ENCODE measurements at regions of chr3 and their contacts with region 1.

Region 1: GRCh38 chr3:69051756-69052471 is at the start of gene TMF1:
- DNase-seq: peak; percentile 96 to 98 (median 97)
- H3K4me3 ChIP-seq: peak within 1 kb of the TSS; percentile 61 to 98 (median 87)
- H3K27ac ChIP-seq: peak within 1 kb of the TSS; percentile 60 to 98 (median 91)
- H3K27me3 ChIP-seq: no peaks in the 10 kb centered on the region
- CTCF ChIP-seq: peak in 19 of 56 donors; percentile 2 to 50 (median 22)
- total RNA-seq, gene TMF1: 26.4 to 42.8 (median 33.8) TPM

Region 2: DNA sequence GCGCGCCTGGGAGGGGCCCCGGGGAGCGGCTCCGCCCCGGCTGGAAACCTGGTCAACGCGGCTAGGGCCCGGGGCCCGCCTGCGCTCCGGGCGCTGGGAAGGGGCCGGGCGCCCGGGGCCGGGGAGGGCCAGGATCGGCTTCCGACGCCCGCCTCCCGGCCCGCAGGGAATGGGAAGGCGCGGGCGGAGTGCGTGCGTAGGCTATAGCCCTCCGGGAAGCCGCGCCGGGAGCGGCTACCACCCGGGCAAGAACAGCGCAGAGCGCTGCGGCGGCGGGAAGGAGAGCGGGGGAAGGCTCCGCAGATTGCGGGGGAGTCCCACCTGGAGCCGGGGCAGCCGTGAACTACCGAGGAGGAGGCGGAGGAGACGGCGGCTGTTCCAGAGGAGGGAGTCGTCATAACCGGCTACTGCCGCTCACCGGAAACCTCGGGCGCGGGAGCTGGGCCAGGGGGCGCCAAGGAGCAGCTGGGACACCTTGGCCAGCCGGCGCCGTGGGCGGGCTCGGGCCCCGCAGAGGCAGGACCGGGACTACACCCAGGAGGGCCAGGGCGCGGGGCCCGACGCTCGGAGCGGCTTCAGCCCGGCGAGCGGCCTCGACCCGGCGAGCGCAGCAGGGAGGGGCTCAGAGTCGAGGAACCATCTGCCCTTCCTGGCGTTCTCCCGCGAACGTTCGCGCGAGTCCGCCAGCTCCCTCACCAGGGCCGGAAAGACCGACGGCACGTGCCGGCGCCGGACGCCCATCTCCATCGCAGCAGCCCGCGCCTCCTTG is 38.5 kb before region 1 on chr3 and contains the start of gene EOGT:
- intact Hi-C with region 1: loop called (anchors 5 kb)
- DNase-seq: peak; percentile 65 to 87 (median 77)
- H3K4me3 ChIP-seq: peak within 1 kb of the TSS; percentile 54 to 95 (median 85)
- H3K27ac ChIP-seq: peak within 1 kb of the TSS in 58 of 59 donors; percentile 61 to 98 (median 92)
- H3K27me3 ChIP-seq: no peaks in the 10 kb centered on the region
- CTCF ChIP-seq: peak; percentile 27 to 80 (median 59)
- total RNA-seq, gene EOGT: 7.7 to 26.0 (median 15.6) TPM

Region 3: DNA sequence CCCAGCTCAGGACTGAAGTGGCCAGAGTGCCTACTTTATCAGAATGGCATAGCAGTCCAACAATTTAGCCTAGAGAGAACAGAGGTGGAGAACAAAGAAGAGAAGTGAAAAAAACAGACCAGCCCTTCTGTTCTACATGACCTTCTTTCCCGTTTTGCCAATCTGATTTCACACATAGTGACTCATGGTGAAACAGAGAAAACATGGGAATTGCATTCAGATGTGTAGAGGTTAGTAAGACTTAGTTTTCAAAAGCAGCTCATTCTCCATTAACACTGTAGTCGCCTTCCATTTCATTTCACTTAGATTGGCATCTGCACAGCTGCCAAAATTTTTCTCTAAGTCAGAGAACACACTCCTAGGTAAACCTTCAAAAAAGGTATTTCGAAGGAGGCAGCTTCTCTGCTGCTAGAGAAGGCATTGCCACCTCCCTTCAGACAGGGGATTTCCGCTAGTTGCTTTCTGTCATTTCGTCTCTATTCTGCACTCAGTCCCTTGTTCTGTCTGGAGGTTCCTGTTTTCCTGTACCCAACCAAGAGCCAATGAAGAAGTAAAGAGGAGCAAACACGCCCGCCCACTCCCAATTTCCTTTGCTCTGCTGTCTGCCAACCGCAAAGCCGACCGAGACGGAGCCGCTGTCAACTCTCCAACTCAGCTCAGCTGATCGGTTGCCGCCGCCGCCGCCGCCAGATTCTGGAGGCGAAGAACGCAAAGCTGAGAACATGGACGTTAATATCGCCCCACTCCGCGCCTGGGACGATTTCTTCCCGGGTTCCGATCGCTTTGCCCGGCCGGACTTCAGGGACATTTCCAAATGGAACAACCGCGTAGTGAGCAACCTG is 32.6 kb after region 1 on chr3 and contains the start of gene ARL6IP5:
- intact Hi-C with region 1: loop called in 1 of 2 experiments (anchors 5 kb)
- DNase-seq: peak; percentile 93 to 98 (median 96)
- H3K4me3 ChIP-seq: peak within 1 kb of the TSS; percentile 60 to 99 (median 92)
- H3K27ac ChIP-seq: peak within 1 kb of the TSS; percentile 85 to 99 (median 98)
- H3K27me3 ChIP-seq: no peaks in the 10 kb centered on the region
- CTCF ChIP-seq: peak in 6 of 56 donors; percentile 4 to 32 (median 13)
- total RNA-seq, gene ARL6IP5: 51.3 to 182 (median 139) TPM

Region 4: DNA sequence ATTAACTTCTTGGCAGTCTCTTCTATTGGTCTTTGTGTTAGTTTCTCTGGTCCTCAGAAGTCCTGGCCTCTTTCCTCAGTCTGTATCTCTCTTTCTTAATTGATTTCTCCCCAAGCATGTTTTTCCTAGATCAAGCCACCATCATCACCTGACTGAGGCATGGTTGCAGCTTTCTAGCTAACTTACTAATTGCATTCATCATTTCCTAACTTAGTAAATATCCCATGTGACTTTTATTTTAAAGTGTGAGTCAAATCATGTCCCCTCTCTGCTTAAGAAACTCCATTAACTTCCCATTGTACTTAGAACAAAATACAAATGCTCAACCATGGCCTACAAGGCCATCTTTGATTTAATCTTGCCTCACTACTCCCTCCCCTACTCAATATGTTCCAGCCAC is 469.4 kb after region 1 on chr3:
- intact Hi-C with region 1: no loop called
- DNase-seq: no peak
- H3K4me3 ChIP-seq: no peak overlapping the region
- H3K27ac ChIP-seq: no peak overlapping the region
- H3K27me3 ChIP-seq: no peaks in the 10 kb centered on the region
- CTCF ChIP-seq: no peak